ENCODE measurements at regions of chr3 and their contacts with region 1.

Region 1: DNA sequence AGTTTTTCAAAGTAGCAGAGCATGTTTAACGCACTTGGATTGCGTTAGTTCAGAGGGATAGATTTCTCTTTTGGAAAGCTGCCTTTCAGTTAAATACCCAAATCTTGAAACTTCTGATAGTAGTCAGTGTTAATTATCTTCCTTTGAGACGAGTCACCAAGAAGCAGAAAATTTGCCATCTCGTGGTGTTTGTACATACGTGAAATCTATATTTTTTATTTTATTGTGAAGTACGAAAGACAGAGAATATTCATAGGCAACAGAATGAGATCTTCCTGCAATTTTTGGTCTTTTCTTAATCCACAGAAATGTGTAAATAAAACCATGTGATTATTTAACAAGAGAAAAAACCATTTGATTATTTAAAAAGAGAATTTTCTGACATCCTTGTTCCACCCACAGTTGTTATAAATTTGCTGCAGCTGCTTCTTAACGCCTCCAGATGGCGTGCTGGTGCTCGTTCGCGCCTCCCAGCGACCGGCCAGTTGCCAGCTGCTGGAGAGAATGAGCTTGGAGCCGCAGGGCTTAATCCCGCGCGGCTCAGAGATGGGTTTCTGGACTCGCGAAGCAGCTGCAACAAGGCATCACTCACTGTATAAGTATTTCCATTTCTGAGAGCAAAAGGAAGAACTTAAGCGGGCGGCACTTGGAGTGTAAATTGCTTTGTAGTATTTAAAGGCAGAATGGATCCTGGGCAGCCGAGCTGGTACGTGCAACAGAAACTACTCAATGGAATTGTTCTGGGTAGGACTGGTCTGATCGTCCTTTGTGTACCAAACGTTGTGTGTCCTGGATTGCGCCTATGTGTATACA is 10.5 kb upstream of the SLITRK3 start:
- DNase-seq: no peak
- H3K4me3 ChIP-seq: peak overlapping the region; percentile 6 to 25
- H3K27ac ChIP-seq: no peak overlapping the region
- H3K4me1 ChIP-seq: no peaks in the 10 kb centered on the region
- H3K27me3 ChIP-seq: no peaks in the 10 kb centered on the region
- CTCF ChIP-seq: peak; percentile 44 to 87 (median 54)
- POLR2A ChIP-seq: no peak

Region 2: DNA sequence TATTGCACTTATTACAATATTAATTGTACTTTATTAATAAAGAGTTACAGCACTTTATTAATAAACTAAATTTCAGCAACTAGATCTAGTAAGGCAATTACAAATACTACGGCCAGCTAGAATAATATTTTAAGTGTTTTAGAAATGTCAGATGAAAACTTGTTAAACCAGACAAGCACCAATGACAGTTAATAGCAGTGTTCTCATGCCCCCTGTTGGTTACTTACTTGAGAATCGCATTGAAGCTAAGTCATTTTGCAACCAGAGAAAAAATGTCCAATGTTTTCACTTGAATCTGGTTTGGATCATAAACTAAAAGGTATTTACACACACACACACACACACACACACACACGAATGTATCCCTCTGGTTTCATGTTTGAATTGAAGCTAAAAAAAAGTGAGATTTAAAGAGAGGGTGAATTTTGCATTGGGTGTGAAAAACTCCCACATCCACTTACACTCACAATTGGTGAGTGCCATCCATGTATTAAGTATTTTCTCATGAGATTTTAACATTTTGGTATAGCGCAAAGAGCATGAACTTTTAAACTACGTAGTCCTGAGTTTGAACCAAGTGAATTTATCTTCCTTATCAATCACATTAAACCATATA is 1825.7 kb after region 1 on chr3:
- intact Hi-C with region 1: loop called (anchors 10 kb)
- DNase-seq: no peak
- H3K4me3 ChIP-seq: no peak overlapping the region
- H3K27ac ChIP-seq: no peak overlapping the region
- H3K4me1 ChIP-seq: no peaks in the 10 kb centered on the region
- H3K27me3 ChIP-seq: no peaks in the 10 kb centered on the region
- CTCF ChIP-seq: peak in 2 of 3 experiments; percentile 11 to 14
- POLR2A ChIP-seq: no peak